Psoas muscle (tissue), 8 donors: ENCODE measurements at regions of chr9 and their contacts with region 1.

Region 1: GRCh38 chr9:7226007-7226640 is 468.4 kb downstream of the KDM4C start:
- DNase-seq: no peak
- ATAC-seq: no peak
- H3K4me3 ChIP-seq: no peak overlapping the region
- H3K27ac ChIP-seq: no peak overlapping the region
- H3K4me1 ChIP-seq: no peaks in the 10 kb centered on the region
- H3K27me3 ChIP-seq: no peaks in the 10 kb centered on the region
- CTCF ChIP-seq: no peak

Region 2: DNA sequence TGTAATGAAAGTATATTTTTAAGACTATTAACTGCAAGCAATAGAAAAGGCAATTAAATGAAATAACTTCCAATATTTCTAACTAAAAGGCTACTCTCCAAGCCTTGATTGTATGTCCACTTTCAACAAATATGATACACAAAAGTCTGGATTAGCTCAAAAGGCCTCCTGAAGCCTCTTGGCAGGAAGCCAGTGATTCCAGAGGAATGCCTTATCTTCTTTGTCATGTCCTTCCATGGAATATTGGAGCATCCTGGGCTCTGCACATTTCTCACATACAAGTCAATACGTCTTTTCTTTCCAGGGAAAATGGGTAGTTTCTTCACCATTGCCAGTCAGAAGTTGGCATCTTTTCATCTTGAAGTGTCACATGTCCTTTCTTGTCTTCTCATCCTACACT is 110.5 kb before region 1 on chr9:
- intact Hi-C with region 1: no loop called
- DNase-seq: no peak
- ATAC-seq: no peak
- H3K4me3 ChIP-seq: no peak overlapping the region
- H3K27ac ChIP-seq: no peak overlapping the region
- H3K4me1 ChIP-seq: peaks cover 15% of the 10 kb centered on the region
- H3K27me3 ChIP-seq: no peaks in the 10 kb centered on the region
- CTCF ChIP-seq: no peak

Region 3: DNA sequence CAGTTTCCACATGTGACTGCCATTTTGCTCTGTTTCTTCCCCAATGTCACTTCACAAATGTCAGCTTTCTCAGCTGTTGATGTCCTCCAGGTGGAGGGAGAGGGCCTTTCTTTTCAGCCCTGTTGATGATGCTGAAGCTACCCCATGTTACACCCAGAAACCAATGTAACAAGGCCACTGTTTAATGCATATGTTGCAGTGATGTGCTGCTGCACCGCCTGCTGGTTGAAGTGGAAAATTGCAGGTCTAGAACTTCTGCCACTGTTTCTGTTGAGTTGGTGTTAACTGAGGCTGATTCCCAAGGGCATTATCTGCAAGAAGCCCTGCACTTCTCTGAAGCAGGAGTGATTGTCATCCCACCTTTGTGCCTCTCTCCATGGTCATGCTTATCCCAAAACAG is 39.9 kb before region 1 on chr9:
- intact Hi-C with region 1: loop called in 1 of 2 experiments (anchors 5 kb)
- DNase-seq: no peak
- ATAC-seq: no peak
- H3K4me3 ChIP-seq: no peak overlapping the region
- H3K27ac ChIP-seq: no peak overlapping the region
- H3K4me1 ChIP-seq: no peaks in the 10 kb centered on the region
- H3K27me3 ChIP-seq: no peaks in the 10 kb centered on the region
- CTCF ChIP-seq: peak; percentile 29